ENCODE measurements at regions of chr1 and their contacts with region 1.

Region 1: DNA sequence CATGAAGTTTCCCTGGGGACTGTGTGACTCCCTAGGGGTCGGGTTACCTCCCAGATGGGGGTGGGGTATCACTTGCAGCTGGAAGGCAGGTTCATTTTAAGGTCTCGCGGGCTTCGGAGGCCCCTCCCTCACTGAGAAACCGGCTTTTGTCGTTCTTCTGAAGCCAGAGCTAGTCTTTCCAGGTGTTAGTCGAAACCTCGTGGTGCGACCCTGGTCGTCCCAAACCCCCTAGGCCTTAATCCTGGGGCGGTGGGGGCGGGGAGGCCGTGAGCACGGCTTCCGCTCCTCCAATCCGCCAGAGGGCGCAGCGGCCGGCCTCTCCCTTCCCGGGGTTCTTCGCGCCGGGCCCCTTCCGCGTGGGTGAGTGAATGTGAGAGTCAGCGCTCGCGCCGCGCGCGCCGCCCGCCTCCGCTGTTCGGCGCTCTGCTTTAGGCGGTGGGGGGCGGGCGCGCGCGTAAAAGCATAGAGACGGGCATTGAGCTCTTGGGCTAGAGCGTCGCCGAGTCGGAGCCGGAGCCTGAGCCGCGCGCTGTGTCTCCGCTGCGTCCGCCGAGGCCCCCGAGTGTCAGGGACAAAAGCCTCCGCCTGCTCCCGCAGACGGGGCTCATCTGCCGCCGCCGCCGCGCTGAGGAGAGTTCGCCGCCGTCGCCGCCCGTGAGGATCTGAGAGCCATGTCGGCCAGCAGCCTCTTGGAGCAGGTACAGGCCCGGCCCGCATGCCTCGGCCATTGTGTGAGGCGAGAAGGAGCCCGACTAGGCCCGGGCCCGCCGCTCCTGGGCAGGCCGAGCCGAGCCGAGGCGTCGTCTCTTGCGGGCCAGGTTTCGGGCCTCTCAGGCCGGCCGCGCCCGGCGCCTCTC is at the start of gene YTHDF2:
- DNase-seq: peak; percentile 97 to 99
- H3K4me3 ChIP-seq: peak within 1 kb of the TSS; percentile 50 to 98 (median 69)
- H3K27ac ChIP-seq: peak within 1 kb of the TSS; percentile 82 to 86 (median 85)
- H3K4me1 ChIP-seq: peaks cover 29 to 41% of the 10 kb centered on the region in 2 donors
- H3K27me3 ChIP-seq: no peaks in the 10 kb centered on the region
- CTCF ChIP-seq: peak; percentile 60 to 96 (median 92)
- POLR2A ChIP-seq: peak; percentile 63 to 78
- total RNA-seq, gene YTHDF2: 53.1 to 74.4 (median 62.2) TPM

Region 2: GRCh38 chr1:28642847-28643635 is 93.6 kb before region 1 on chr1 and contains the start of gene TAF12:
- intact Hi-C with region 1: loop called (anchors 5 kb)
- DNase-seq: peak; percentile 90
- H3K4me3 ChIP-seq: peak within 1 kb of the TSS; percentile 62 to 98 (median 67)
- H3K27ac ChIP-seq: peak within 1 kb of the TSS; percentile 74 to 84 (median 77)
- H3K4me1 ChIP-seq: peaks cover 15 to 26% of the 10 kb centered on the region in 2 donors
- H3K27me3 ChIP-seq: no peaks in the 10 kb centered on the region
- CTCF ChIP-seq: peak in 2 of 6 experiments; percentile 37 to 52
- POLR2A ChIP-seq: peak; percentile 77 to 98
- total RNA-seq, gene TAF12: 15.4 to 25.4 (median 18.4) TPM

Region 3: GRCh38 chr1:28656335-28656734 is 80.3 kb before region 1 on chr1:
- intact Hi-C with region 1: no loop called
- DNase-seq: no peak
- H3K4me3 ChIP-seq: no peak overlapping the region
- H3K27ac ChIP-seq: no peak overlapping the region
- H3K4me1 ChIP-seq: no peaks in the 10 kb centered on the region
- H3K27me3 ChIP-seq: no peaks in the 10 kb centered on the region
- CTCF ChIP-seq: no peak
- POLR2A ChIP-seq: no peak

Region 4: GRCh38 chr1:28775121-28775944 is 38.7 kb after region 1 on chr1:
- intact Hi-C with region 1: loop called (anchors 5 kb)
- DNase-seq: peak; percentile 82 to 85
- H3K4me3 ChIP-seq: peak overlapping the region; percentile 5 to 31 (median 18)
- H3K27ac ChIP-seq: peak overlapping the region; percentile 36 to 52 (median 42)
- H3K4me1 ChIP-seq: peaks cover 4 to 14% of the 10 kb centered on the region in 2 donors
- H3K27me3 ChIP-seq: no peaks in the 10 kb centered on the region
- CTCF ChIP-seq: no peak
- POLR2A ChIP-seq: peak in 1 of 2 donors; percentile 79

Measured in thyroid gland (tissue), 4 donors.